SK-N-SH (cell line): ENCODE measurements at regions of chr19 and their contacts with region 1.

Region 1: GRCh38 chr19:45340232-45340898 is at the start of gene KLC3:
- DNase-seq: peak; percentile 70
- H3K4me3 ChIP-seq: peak within 1 kb of the TSS; percentile 40 to 49; a peak in 3 of 4 replicates
- H3K27ac ChIP-seq: no peak within 1 kb of the TSS
- H3K4me1 ChIP-seq: peaks cover 0 to 2% of the 10 kb centered on the region in 2 experiments; a peak in 1 of 4 replicates
- H3K27me3 ChIP-seq: no peaks in the 10 kb centered on the region; the same call in 1 of the 2 replicates
- CTCF ChIP-seq: no peak
- EP300 ChIP-seq: no peak
- RAD21 ChIP-seq: no peak
- polyA plus RNA-seq, gene KLC3: 0.75 and 1.2 TPM in 2 replicates

Region 2: DNA sequence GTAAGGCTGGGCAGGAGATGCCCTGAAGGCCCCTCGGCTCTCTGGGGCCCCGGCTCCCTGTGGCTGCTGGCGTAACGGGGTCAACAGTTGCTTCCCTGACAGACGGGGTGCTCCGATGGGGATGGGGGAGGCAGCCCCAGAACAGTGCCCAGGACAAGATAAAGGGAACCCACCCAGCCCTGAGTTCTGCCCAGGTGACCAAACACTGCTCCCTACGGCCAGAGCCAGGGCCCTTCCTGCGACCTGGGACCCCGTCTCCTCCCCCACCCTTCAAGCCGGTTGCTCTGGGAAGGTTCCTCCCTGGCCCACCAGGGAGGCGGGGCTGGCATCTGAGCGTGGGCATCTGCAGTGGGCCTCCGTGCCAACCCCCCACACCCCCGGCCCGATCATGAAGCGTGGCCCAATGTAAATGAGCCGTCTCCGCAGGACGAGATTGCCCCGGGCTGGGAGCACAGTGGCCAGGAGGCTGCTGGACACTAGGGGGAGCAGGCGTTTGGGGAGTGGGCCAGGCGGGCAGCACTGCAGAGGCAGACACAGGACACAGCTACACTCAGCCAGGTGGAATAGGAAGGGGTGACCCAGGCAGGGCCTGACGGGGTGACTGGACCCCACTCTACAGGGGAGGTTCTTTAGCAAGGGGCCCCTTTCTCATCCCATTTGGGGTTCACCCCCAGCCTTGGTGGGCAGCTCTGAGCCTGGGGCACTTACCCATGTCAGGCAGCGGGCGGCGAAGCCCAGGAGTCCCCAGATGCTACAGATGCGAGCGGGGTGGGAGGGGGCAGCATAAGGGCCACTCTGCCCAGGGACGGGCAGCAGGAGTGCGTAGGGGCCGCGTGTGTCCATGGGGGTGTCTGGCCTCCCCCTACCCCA is 178.4 kb before region 1 on chr19:
- CTCF ChIA-PET with region 1: interaction called, 16 read pairs
- POLR2A ChIA-PET with region 1: no interaction called
- DNase-seq: peak; percentile 89
- H3K4me3 ChIP-seq: no peak overlapping the region; a peak in 1 of 4 replicates
- H3K27ac ChIP-seq: no peak overlapping the region
- H3K4me1 ChIP-seq: peaks cover 0 to 9% of the 10 kb centered on the region in 2 experiments; a peak in 1 of 4 replicates
- H3K27me3 ChIP-seq: no peaks in the 10 kb centered on the region
- CTCF ChIP-seq: peak; percentile 67
- EP300 ChIP-seq: no peak
- RAD21 ChIP-seq: peak; percentile 65

Region 3: GRCh38 chr19:45200568-45200994 is 139.8 kb before region 1 on chr19:
- CTCF ChIA-PET with region 1: interaction called, 14 read pairs
- POLR2A ChIA-PET with region 1: no interaction called
- DNase-seq: no peak
- H3K4me3 ChIP-seq: no peak overlapping the region
- H3K27ac ChIP-seq: no peak overlapping the region
- H3K4me1 ChIP-seq: no peaks in the 10 kb centered on the region
- H3K27me3 ChIP-seq: no peaks in the 10 kb centered on the region
- CTCF ChIP-seq: peak; percentile 46
- EP300 ChIP-seq: no peak
- RAD21 ChIP-seq: peak; percentile 68

Region 4: GRCh38 chr19:45250832-45251451 is 89.4 kb before region 1 on chr19 and contains the start of gene MARK4:
- CTCF ChIA-PET with region 1: interaction called, 49 read pairs
- POLR2A ChIA-PET with region 1: no interaction called
- DNase-seq: peak; percentile 99
- H3K4me3 ChIP-seq: peak within 1 kb of the TSS; percentile 67 to 74
- H3K27ac ChIP-seq: peak within 1 kb of the TSS; percentile 13 to 58; a peak in 2 of 4 replicates
- H3K4me1 ChIP-seq: peaks cover 10 to 30% of the 10 kb centered on the region in 2 experiments; a peak in 2 of 4 replicates
- H3K27me3 ChIP-seq: no peaks in the 10 kb centered on the region
- CTCF ChIP-seq: no peak
- EP300 ChIP-seq: no peak
- RAD21 ChIP-seq: no peak
- polyA plus RNA-seq, gene MARK4: 9.8 and 16.3 TPM in 2 replicates

Region 5: DNA sequence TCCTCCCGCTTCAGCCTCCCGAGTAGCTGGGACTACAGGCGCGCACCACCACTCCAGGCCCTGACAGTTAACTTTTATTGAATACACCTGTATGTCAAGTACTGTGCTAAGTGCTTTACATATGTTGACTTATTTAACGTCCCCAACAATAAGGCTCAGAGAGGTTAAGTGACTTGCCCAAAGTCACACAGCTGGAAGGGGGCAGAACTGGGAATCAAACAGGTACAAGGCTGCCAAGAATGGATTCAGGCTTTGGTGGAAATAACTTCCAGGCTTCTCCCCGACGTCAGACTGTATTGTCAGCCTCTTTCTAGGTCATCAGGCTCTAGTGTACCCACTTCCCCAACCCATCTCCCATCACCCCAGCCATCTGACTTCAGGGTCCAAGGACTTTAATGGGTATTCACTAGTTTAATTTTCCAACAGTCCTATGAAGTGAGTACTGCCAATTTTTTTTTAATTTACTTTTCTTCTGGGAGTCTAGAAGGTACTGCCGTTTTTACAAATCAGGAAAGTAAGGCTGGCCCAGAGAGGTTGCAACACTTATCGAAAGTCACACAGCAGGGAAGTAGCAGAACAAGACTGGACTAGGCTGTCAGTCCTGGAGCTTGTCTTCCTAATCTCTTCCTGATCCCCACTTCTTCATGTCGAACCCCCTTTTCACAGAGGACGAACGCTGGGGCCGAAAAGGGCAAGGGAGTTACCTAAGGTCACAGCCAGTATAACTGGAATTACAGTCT is 12.8 kb before region 1 on chr19:
- CTCF ChIA-PET with region 1: interaction called, 13 read pairs
- POLR2A ChIA-PET with region 1: no interaction called
- DNase-seq: no peak
- H3K4me3 ChIP-seq: no peak overlapping the region
- H3K27ac ChIP-seq: no peak overlapping the region
- H3K4me1 ChIP-seq: peaks cover 0 to 5% of the 10 kb centered on the region in 2 experiments; a peak in 1 of 4 replicates
- H3K27me3 ChIP-seq: no peaks in the 10 kb centered on the region
- CTCF ChIP-seq: no peak
- EP300 ChIP-seq: no peak
- RAD21 ChIP-seq: no peak

Region 6: DNA sequence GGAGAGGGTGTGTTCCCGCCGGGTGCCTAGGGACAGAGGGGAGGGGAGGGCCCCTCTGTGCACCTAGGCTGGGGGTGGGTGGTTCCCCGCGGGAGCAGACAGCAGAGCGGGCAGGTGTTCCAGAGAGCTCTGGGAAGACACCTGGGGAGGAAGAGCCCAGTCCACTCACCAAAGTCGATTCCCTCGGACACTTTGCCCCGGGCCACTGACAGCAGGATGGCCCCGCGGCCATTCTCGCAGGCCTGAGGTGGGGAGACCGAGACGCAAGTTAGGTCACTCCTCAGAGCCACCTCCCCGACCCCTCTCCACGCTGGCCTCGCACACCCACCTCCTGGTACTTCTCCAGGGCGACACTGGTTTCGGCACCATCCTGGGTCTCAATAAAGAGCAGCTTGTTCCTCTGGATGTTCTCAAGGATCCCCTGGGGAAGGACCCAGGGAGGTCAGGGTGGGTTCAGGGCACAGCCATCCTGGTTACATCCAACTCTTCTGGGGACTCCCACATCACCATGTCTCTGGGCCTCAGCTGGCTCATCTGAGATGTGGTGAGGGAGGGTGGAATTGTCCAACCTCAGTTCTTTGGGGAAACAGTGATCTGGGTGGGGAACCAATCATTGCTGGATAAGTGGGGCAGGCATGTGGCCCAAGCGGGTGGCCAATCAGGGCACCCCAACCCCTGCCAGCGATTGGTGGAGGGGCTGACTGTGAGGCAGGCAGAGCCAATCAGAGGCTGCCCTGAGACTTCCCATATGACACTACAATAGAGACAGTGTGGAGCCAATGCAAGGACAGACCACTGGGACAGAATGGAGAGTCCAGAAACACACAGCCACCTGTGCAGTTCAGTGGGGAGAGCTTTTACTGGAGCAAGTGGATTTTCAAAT is 12.8 kb after region 1 on chr19:
- CTCF ChIA-PET with region 1: interaction called, 30 read pairs
- POLR2A ChIA-PET with region 1: no interaction called
- DNase-seq: peak; percentile 47
- H3K4me3 ChIP-seq: no peak overlapping the region
- H3K27ac ChIP-seq: no peak overlapping the region
- H3K4me1 ChIP-seq: no peaks in the 10 kb centered on the region; a peak in 1 of 4 replicates
- H3K27me3 ChIP-seq: no peaks in the 10 kb centered on the region
- CTCF ChIP-seq: no peak
- EP300 ChIP-seq: no peak
- RAD21 ChIP-seq: no peak

Region 7: DNA sequence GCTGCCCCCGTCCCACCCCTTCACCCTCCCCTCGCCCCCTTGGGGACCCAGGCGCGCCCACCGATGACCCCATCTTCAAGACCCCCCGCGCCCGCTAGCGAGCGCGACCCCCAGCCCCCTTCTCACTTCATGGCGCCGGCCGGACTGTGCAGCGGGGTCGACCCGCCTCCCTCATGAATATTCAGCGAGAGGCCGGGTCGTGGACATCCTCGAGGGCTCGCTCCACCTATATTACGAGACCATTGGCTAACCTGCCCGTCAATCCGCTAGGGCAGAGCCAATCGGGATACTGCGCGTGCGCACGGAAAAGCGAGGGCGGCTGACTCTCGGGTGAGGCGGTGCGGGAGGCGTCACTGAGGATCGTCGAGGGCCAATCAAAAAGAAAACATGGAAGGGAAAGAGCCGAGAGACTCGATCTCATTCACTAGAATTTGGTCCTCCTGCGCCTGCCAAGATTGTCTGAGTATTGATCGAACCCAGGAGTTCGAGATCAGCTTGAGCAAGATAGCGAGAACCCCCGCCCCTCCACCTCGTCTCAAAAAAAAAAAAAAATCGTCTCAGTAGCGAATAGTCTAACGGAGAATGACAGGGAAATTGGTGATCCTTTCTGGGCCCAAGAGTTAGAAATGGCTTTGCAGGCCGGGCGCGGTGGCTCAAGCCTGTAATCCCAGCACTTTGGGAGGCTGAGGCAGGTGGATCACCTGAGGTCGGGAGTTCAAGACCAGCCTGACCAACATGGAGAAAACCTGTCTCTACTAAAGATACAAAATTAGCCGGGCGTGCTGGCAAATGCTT is 30.2 kb after region 1 on chr19 and contains the start of gene ERCC2:
- CTCF ChIA-PET with region 1: interaction called, 13 read pairs
- POLR2A ChIA-PET with region 1: no interaction called
- DNase-seq: peak; percentile 100
- H3K4me3 ChIP-seq: peak within 1 kb of the TSS; percentile 60 to 90
- H3K27ac ChIP-seq: peak within 1 kb of the TSS; percentile 79 to 88
- H3K4me1 ChIP-seq: peaks cover 5 to 7% of the 10 kb centered on the region in 2 experiments; a peak in 2 of 4 replicates
- H3K27me3 ChIP-seq: no peaks in the 10 kb centered on the region
- CTCF ChIP-seq: no peak
- EP300 ChIP-seq: no peak
- RAD21 ChIP-seq: no peak
- polyA plus RNA-seq, gene ERCC2: 62.7 and 72.8 TPM in 2 replicates